HepG2 (cell line): ENCODE measurements at regions of chr12 and their contacts with region 1.

Region 1: DNA sequence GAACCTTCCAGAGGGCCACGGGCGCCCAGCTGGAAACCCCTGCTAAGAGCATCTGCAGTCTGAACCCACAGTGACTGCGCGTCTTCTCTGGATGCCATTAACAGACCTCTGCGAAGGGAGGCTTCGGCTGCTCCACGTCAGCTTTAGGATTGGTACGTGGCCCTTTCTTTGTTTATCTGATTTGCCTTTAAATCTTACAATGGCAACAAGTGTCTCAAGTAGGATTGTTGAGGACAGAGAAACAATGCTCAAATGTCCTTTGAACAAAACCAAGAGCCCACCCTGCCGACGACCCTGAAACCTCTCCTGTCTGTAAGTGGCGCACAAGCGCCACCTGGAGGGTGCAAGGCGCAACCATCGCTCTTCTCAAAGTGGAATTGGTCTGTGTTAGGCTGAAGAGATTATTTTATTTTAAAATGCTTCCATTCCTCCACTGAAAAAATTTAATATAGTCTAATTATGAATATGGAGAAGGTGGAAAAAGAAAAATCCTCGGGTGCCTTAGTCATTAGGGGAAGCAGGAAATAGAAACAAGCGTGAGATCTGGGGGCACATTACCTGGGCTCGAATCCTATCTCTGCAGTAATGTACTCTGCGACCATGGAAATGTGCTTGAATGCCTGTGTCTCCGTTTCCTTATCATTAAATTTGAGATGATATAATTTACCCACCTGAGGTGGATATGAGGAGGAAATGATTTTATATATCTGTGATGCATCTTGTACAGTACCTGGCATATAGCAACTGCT is 82.6 kb upstream of the PTPRB start:
- DNase-seq: peak; percentile 1
- ATAC-seq: peak; percentile 77
- H3K4me3 ChIP-seq: no peak overlapping the region
- H3K27ac ChIP-seq: no peak overlapping the region
- H3K4me1 ChIP-seq: no peaks in the 10 kb centered on the region
- H3K27me3 ChIP-seq: no peaks in the 10 kb centered on the region; a peak in 1 of 5 replicates
- CTCF ChIP-seq: peak; percentile 84
- EP300 ChIP-seq: no peak
- POLR2A ChIP-seq: no peak
- RAD21 ChIP-seq: peak; percentile 65

Region 2: GRCh38 chr12:69900720-69901131 is 819.1 kb before region 1 on chr12:
- CTCF ChIA-PET with region 1: interaction called, 8 read pairs
- POLR2A ChIA-PET with region 1: no interaction called
- in situ Hi-C with region 1: no loop called
- intact Hi-C with region 1: loop called (anchors 5 kb)
- DNase-seq: peak; percentile 76
- ATAC-seq: peak; percentile 84
- H3K4me3 ChIP-seq: no peak overlapping the region
- H3K27ac ChIP-seq: no peak overlapping the region
- H3K4me1 ChIP-seq: no peaks in the 10 kb centered on the region
- H3K27me3 ChIP-seq: no peaks in the 10 kb centered on the region
- CTCF ChIP-seq: peak; percentile 80
- EP300 ChIP-seq: no peak
- POLR2A ChIP-seq: no peak
- RAD21 ChIP-seq: peak; percentile 68

Region 3: DNA sequence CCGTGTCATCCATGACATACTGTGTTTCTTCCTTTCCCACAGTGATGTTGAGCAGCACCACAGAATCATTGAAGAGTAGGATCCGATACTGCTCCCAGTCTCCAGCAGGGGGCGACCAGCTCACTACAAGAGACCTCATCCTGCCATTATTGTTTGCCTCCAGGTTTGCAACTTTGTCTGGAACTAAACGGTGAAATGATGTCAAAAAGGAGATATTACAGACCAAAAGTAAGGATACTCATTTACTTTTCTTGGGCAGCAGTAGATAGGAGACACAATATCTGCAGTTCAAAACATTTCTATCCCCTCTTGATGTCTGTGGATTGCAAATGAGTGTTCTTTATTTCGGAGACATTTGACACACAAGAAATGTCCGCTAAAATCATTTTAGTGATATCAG is 129.8 kb before region 1 on chr12:
- CTCF ChIA-PET with region 1: interaction called, 18 read pairs
- POLR2A ChIA-PET with region 1: no interaction called
- in situ Hi-C with region 1: loop called (anchors 5 kb)
- intact Hi-C with region 1: loop called (anchors 1 kb)
- DNase-seq: peak; percentile 49
- ATAC-seq: peak; percentile 94
- H3K4me3 ChIP-seq: no peak overlapping the region
- H3K27ac ChIP-seq: no peak overlapping the region
- H3K4me1 ChIP-seq: no peaks in the 10 kb centered on the region
- H3K27me3 ChIP-seq: no peaks in the 10 kb centered on the region
- CTCF ChIP-seq: peak; percentile 84
- EP300 ChIP-seq: no peak
- POLR2A ChIP-seq: no peak
- RAD21 ChIP-seq: peak; percentile 55; the same call in 1 of the 2 replicates

Region 4: DNA sequence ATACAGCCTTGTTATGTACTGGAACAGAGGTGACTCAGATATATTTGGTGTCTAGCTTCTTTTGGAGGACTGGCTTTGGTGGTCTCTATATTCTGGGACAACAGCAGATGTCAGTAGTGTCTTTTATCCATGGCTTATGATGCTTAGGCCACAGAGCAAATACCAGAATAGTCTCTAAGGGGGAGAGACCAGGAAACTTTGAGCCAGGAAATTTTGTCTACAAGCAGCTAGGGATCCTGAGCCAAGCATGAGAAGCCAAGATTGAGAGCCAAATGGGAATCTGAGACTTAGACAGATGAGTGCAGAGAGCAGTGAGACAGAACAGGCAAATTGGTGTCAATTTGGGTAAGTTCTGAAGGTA is 229.1 kb after region 1 on chr12:
- CTCF ChIA-PET with region 1: no interaction called
- POLR2A ChIA-PET with region 1: no interaction called
- in situ Hi-C with region 1: no loop called
- intact Hi-C with region 1: no loop called
- DNase-seq: no peak
- ATAC-seq: no peak
- H3K4me3 ChIP-seq: no peak overlapping the region
- H3K27ac ChIP-seq: no peak overlapping the region
- H3K4me1 ChIP-seq: no peaks in the 10 kb centered on the region
- H3K27me3 ChIP-seq: no peaks in the 10 kb centered on the region
- CTCF ChIP-seq: no peak
- EP300 ChIP-seq: no peak
- POLR2A ChIP-seq: no peak
- RAD21 ChIP-seq: no peak